A549 (cell line): ENCODE measurements at regions of chr10 and their contacts with region 1.

Region 1: DNA sequence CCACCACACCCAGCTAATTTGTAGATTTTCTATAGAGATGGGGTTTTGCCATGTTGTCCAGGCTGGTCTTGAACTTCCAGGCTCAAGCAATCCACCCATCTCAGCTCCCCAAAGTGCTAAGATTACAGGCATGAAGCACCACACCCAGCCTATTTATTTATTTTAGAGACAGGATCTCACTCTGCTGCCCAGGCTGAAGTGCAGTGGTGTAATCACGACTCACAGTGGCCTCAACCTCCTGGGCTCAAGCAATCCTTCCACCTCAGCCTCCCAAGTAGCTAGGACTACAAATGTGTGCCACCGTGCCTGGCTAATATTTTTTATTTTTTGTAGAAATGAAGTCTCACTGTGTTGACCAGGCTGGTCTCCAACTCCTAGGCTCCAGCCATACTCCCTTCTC is 6.9 kb upstream of the FRAT2 start:
- DNase-seq: no peak
- ATAC-seq: no peak
- H3K4me3 ChIP-seq: no peak overlapping the region
- H3K27ac ChIP-seq: no peak overlapping the region
- H3K4me1 ChIP-seq: peaks cover 11% of the 10 kb centered on the region; the same call in 2 of the 3 replicates
- CTCF ChIP-seq: no peak
- EP300 ChIP-seq: no peak
- POLR2A ChIP-seq: no peak
- RAD21 ChIP-seq: no peak

Region 2: GRCh38 chr10:97222326-97222961 is 119.0 kb before region 1 on chr10:
- CTCF ChIA-PET with region 1: no interaction called
- POLR2A ChIA-PET with region 1: no interaction called
- DNase-seq: no peak
- ATAC-seq: no peak
- H3K4me3 ChIP-seq: no peak overlapping the region
- H3K27ac ChIP-seq: no peak overlapping the region
- H3K4me1 ChIP-seq: no peaks in the 10 kb centered on the region
- CTCF ChIP-seq: no peak
- EP300 ChIP-seq: no peak
- POLR2A ChIP-seq: no peak
- RAD21 ChIP-seq: no peak

Region 3: DNA sequence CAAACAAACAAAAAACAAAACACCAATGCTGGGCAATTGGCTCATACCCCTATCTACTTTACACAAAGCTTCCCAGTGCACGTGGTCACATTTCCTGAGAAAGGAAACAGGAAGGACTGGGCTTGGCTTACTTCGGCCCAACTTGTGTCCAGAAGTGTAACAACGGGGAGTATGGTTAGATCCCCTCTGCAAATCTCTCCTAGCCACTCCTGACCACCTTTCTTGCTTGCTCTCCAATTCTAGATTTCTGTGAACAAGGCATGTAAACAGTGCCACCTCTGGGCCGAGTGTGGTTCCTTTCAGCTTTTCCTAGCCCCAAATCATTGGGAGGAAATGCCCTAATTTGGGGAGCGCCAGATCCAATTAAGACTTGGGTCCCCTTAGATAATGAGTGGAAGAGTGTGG is 14.2 kb after region 1 on chr10:
- CTCF ChIA-PET with region 1: interaction called, 10 read pairs
- POLR2A ChIA-PET with region 1: no interaction called
- DNase-seq: no peak
- ATAC-seq: peak in 1 of 2 experiments; percentile 30; a peak in 2 of 6 replicates
- H3K4me3 ChIP-seq: no peak overlapping the region
- H3K27ac ChIP-seq: no peak overlapping the region
- H3K4me1 ChIP-seq: no peaks in the 10 kb centered on the region
- CTCF ChIP-seq: peak; percentile 30
- EP300 ChIP-seq: no peak
- POLR2A ChIP-seq: no peak
- RAD21 ChIP-seq: peak; percentile 46 to 56; a peak in 4 of 5 replicates